ENCODE measurements at regions of chr18 and their contacts with region 1.

Region 1: GRCh38 chr18:59353079-59353680 is 5.9 kb downstream of the LMAN1 start:
- DNase-seq: no peak
- H3K4me3 ChIP-seq: no peak overlapping the region
- H3K27ac ChIP-seq: no peak overlapping the region
- H3K4me1 ChIP-seq: peaks cover 0 to 12% (median 5%) of the 10 kb centered on the region in 4 experiments
- H3K27me3 ChIP-seq: no peaks in the 10 kb centered on the region

Region 2: GRCh38 chr18:59308248-59308937 is 44.8 kb before region 1 on chr18:
- CTCF ChIA-PET with region 1: interaction called, 18 read pairs
- POLR2A ChIA-PET with region 1: no interaction called
- DNase-seq: peak; percentile 42 to 82 (median 73)
- H3K4me3 ChIP-seq: peak overlapping the region in 3 of 7 experiments; percentile 35 to 70 (median 56)
- H3K27ac ChIP-seq: no peak overlapping the region
- H3K4me1 ChIP-seq: peaks cover 0 to 9% (median 5%) of the 10 kb centered on the region in 4 experiments
- H3K27me3 ChIP-seq: peaks cover 8 to 49% (median 23%) of the 10 kb centered on the region in 5 experiments

Region 3: GRCh38 chr18:59332986-59333385 is 20.2 kb before region 1 on chr18:
- CTCF ChIA-PET with region 1: interaction called, 34 read pairs
- POLR2A ChIA-PET with region 1: no interaction called
- DNase-seq: no peak
- H3K4me3 ChIP-seq: no peak overlapping the region
- H3K27ac ChIP-seq: no peak overlapping the region
- H3K4me1 ChIP-seq: no peaks in the 10 kb centered on the region
- H3K27me3 ChIP-seq: no peaks in the 10 kb centered on the region